ENCODE measurements at regions of chr1 and their contacts with region 1.

Region 1: GRCh38 chr1:155084722-155085503 is 6.3 kb downstream of the EFNA3 start:
- DNase-seq: peak; percentile 94 to 96 (median 96)
- H3K4me3 ChIP-seq: peak overlapping the region; percentile 72 to 92 (median 83)
- H3K27ac ChIP-seq: peak overlapping the region; percentile 46 to 71
- H3K4me1 ChIP-seq: peaks cover 3 to 67% (median 62%) of the 10 kb centered on the region in 4 experiments
- H3K27me3 ChIP-seq: peaks cover 0 to 42% (median 27%) of the 10 kb centered on the region in 5 experiments

Region 2: GRCh38 chr1:155044812-155045690 is 39.9 kb before region 1 on chr1:
- CTCF ChIA-PET with region 1: interaction called, 168 read pairs
- POLR2A ChIA-PET with region 1: no interaction called
- DNase-seq: peak; percentile 78 to 91 (median 91)
- H3K4me3 ChIP-seq: no peak overlapping the region
- H3K27ac ChIP-seq: no peak overlapping the region
- H3K4me1 ChIP-seq: peaks cover 3 to 19% (median 13%) of the 10 kb centered on the region in 4 experiments
- H3K27me3 ChIP-seq: no peaks in the 10 kb centered on the region

Region 3: GRCh38 chr1:155063550-155064110 is 21.3 kb before region 1 on chr1 and contains the start of gene EFNA4:
- CTCF ChIA-PET with region 1: interaction called, 168 read pairs
- POLR2A ChIA-PET with region 1: interaction called, 10 read pairs
- DNase-seq: peak; percentile 88 to 95 (median 95)
- H3K4me3 ChIP-seq: peak within 1 kb of the TSS; percentile 44 to 88 (median 76)
- H3K27ac ChIP-seq: peak within 1 kb of the TSS in 1 of 2 experiments; percentile 34
- H3K4me1 ChIP-seq: peaks cover 0 to 29% (median 27%) of the 10 kb centered on the region in 4 experiments
- H3K27me3 ChIP-seq: no peaks in the 10 kb centered on the region

Region 4: DNA sequence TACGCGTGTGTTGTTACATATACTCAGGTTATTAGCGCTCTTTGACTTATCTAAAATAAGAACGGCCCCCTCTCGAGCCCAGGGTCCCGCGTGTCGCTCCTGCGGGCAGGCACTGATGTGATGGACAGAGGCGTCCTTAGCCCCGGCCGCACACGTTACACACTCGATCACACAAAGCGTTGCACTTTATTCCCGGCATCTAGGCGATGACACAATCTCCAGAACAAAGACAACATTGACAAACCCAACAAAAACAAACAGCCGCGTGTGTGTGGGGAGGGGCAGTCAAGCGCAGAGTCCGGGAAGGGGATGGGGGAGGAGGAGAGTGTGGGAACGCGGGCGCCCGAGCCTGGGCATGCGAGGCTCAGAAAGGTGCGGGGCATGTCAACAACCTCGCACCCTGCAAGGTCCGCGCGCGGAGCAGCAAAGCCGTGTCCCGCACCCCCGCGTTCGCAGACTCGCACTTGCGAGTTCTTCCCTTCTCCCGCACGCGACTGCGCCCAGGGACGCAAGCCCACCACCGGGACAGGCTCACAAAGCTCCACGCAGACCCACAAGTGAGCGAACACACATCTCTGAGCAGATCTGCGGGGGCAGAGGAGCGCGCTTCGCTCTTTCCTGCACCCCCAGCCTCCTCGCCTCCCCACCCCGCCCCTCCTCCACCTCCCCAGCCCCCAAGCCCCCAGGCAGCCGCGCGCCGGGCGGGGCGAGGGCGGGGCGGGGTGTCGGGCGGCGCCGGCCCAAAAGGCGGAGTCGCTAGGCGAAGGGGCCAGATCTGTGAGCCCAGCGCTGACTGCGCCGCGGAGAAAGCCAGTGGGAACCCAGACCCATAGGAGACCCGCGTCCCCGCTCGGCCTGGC is 42.4 kb after region 1 on chr1 and contains the start of gene EFNA1:
- CTCF ChIA-PET with region 1: interaction called, 13 read pairs
- POLR2A ChIA-PET with region 1: no interaction called
- DNase-seq: peak in 2 of 3 donors; percentile 42 to 56
- H3K4me3 ChIP-seq: peak within 1 kb of the TSS; percentile 47 to 89 (median 82)
- H3K27ac ChIP-seq: peak within 1 kb of the TSS in 1 of 2 experiments; percentile 78
- H3K4me1 ChIP-seq: peaks cover 9 to 54% (median 49%) of the 10 kb centered on the region in 4 experiments
- H3K27me3 ChIP-seq: peaks cover 0 to 9% (median 3%) of the 10 kb centered on the region in 5 experiments

Region 5: DNA sequence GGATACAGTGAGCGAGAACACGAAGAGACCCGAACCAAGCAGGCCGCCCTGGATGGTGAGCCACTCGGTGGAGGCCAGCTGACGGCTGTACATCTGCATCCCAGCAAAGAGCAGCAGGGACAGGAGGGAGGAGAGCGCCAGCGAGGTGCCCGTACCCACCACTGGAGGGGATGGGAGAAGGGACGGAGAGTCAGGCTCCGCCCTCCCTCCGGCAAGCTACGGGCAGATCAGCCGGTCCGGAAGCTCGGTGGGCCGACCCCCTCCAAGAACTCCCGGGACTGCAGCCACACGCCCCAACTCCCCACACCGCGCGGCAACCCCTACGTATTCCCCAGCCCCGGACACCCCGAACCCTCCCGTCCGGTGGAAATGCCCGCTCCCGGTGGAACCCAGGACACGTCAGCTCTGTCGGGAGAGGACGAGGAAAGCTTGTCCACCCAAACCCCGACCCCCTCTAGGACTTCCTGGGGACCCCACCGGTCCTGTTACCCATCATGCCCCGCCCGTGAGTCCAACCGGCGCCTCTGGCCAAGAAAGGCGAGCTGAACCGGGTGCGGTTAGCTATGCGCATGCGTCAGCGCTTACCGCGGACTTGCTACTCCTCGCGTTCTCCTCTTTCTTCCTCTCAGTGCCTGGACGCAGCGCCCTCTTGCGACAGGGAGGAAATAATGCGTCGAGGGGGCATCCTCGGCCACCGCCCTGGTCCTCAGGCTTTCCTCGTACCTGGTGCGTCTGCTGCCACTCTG is 88.0 kb after region 1 on chr1 and contains the start of gene KRTCAP2:
- CTCF ChIA-PET with region 1: interaction called, 258 read pairs
- POLR2A ChIA-PET with region 1: interaction called, 5 read pairs
- DNase-seq: peak; percentile 95 to 97 (median 96)
- H3K4me3 ChIP-seq: peak within 1 kb of the TSS; percentile 77 to 95 (median 88)
- H3K27ac ChIP-seq: peak within 1 kb of the TSS; percentile 84 to 93
- H3K4me1 ChIP-seq: peaks cover 0 to 47% (median 41%) of the 10 kb centered on the region in 4 experiments
- H3K27me3 ChIP-seq: no peaks in the 10 kb centered on the region

Measured in common myeloid progenitor, CD34-positive (primary cell).